ENCODE measurements at regions of chr2 and their contacts with region 1.

Region 1: DNA sequence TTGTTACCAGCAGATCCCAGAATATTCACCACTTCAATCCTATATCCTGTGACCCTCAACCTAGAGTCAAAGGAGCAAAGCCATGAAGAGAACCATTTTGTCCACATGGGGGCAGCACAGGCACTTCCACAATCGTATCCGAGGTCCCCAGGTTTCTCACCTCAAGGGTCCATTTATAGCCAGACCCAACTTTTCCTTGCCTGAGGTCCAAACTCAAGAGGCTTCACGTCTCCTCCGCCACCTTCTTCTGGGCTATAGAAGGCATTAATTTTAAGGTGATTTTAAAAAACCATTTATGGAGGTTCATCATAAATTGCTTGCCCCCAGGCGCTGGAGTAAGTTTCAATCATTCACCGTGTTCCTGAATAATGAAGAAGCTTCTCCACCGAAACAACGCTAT is 111.6 kb upstream of the NABP1 start:
- DNase-seq: peak; percentile 66 to 73 (median 67)
- H3K4me3 ChIP-seq: no peak overlapping the region
- H3K27ac ChIP-seq: no peak overlapping the region
- H3K4me1 ChIP-seq: peaks cover 13 to 42% (median 36%) of the 10 kb centered on the region in 4 experiments
- H3K27me3 ChIP-seq: no peaks in the 10 kb centered on the region

Region 2: GRCh38 chr2:191555092-191555742 is 11.1 kb before region 1 on chr2:
- CTCF ChIA-PET with region 1: interaction called, 10 read pairs
- POLR2A ChIA-PET with region 1: no interaction called
- DNase-seq: peak; percentile 81 to 89 (median 83)
- H3K4me3 ChIP-seq: peak overlapping the region in 1 of 7 experiments; percentile 57
- H3K27ac ChIP-seq: no peak overlapping the region
- H3K4me1 ChIP-seq: peaks cover 0 to 3% (median 1%) of the 10 kb centered on the region in 4 experiments
- H3K27me3 ChIP-seq: no peaks in the 10 kb centered on the region

Region 3: GRCh38 chr2:191676790-191677645 is 110.7 kb after region 1 on chr2:
- CTCF ChIA-PET with region 1: interaction called, 10 read pairs
- POLR2A ChIA-PET with region 1: interaction called, 3 read pairs
- DNase-seq: peak; percentile 37 to 87 (median 84)
- H3K4me3 ChIP-seq: peak overlapping the region; percentile 23 to 93 (median 85)
- H3K27ac ChIP-seq: peak overlapping the region; percentile 74 to 87
- H3K4me1 ChIP-seq: peaks cover 29 to 58% (median 41%) of the 10 kb centered on the region in 4 experiments
- H3K27me3 ChIP-seq: no peaks in the 10 kb centered on the region

Region 4: GRCh38 chr2:191691016-191691735 is 124.8 kb after region 1 on chr2:
- CTCF ChIA-PET with region 1: interaction called, 15 read pairs
- POLR2A ChIA-PET with region 1: interaction called, 6 read pairs
- DNase-seq: peak; percentile 81 to 89 (median 85)
- H3K4me3 ChIP-seq: no peak overlapping the region
- H3K27ac ChIP-seq: no peak overlapping the region
- H3K4me1 ChIP-seq: peaks cover 0 to 16% (median 7%) of the 10 kb centered on the region in 4 experiments
- H3K27me3 ChIP-seq: peaks cover 0 to 3% (median 0%) of the 10 kb centered on the region in 5 experiments

Measured in common myeloid progenitor, CD34-positive (primary cell).